CD8-positive, alpha-beta T cell (primary cell): ENCODE measurements at regions of chr9 and their contacts with region 1.

Region 1: DNA sequence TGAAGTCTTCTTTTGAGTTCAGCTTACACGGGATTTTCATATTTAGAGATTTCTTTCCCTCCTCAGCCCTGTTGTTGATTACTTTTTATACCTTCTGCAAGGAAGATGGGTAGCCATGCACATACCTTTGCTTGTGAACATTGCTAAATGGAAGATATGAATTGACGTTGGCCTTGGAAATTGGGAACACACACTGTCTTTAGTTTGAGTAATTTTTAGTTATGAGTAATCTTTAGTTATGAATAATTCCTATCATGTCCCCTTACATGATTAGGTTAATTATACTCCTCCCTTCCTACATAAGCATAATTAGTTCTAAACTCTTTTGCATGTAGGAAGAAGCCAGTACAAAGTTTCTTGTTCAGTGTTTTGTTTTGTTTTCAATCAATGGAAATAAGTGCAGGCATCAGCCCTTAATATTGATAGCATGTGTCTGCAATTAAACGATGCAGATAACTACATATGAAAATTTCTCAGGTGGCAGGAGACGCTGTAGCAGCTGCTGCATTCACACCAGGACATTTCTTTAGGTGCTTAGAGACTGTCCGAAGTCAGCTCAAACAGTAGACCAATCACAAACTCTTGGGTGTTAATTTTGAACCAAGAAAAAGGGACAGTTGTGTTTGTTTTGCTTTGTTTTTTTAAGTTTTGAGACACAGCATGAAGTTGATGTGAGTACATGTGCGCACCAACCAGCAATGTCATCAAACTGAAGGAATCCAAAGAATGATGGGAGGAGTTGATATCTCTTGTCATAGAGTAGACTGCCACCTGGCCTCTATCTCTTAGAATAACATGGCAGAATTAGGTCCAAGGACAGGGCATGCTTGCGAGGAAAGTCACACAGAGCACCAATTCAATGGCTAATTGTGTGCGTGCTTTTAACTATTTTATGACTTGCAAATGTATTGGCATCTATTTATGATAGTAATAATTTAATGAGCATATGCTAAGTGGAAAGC is 51.4 kb downstream of the SMARCA2 start:
- DNase-seq: peak in 2 of 9 experiments; percentile 36 to 55
- ATAC-seq: peak; percentile 71
- H3K4me3 ChIP-seq: no peak overlapping the region
- H3K4me3 Mint-ChIP-seq: no peak overlapping the region
- H3K27ac ChIP-seq: no peak overlapping the region
- H3K27ac Mint-ChIP-seq: peak overlapping the region; percentile 66
- H3K4me1 ChIP-seq: no peaks in the 10 kb centered on the region
- H3K4me1 Mint-ChIP-seq: peaks cover 6% of the 10 kb centered on the region
- H3K27me3 ChIP-seq: no peaks in the 10 kb centered on the region
- H3K27me3 Mint-ChIP-seq: no peaks in the 10 kb centered on the region
- CTCF ChIP-seq: peak; percentile 52

Region 2: GRCh38 chr9:1709345-1709744 is 357.2 kb before region 1 on chr9:
- CTCF ChIA-PET with region 1: interaction called, 3 read pairs
- POLR2A ChIA-PET with region 1: no interaction called
- intact Hi-C with region 1: loop called (anchors 5 kb)
- DNase-seq: peak in 2 of 9 experiments; percentile 19 to 37
- ATAC-seq: no peak
- H3K4me3 ChIP-seq: no peak overlapping the region
- H3K4me3 Mint-ChIP-seq: no peak overlapping the region
- H3K27ac ChIP-seq: no peak overlapping the region
- H3K27ac Mint-ChIP-seq: no peak overlapping the region
- H3K4me1 ChIP-seq: no peaks in the 10 kb centered on the region
- H3K4me1 Mint-ChIP-seq: no peaks in the 10 kb centered on the region
- H3K27me3 ChIP-seq: no peaks in the 10 kb centered on the region
- H3K27me3 Mint-ChIP-seq: peaks cover 15% of the 10 kb centered on the region
- CTCF ChIP-seq: no peak

Region 3: GRCh38 chr9:1726993-1727759 is 339.4 kb before region 1 on chr9:
- CTCF ChIA-PET with region 1: interaction called, 5 read pairs
- POLR2A ChIA-PET with region 1: no interaction called
- intact Hi-C with region 1: loop called (anchors 2 to 5 kb)
- DNase-seq: peak in 3 of 9 experiments; percentile 5 to 38 (median 22)
- ATAC-seq: no peak
- H3K4me3 ChIP-seq: no peak overlapping the region
- H3K4me3 Mint-ChIP-seq: no peak overlapping the region
- H3K27ac ChIP-seq: no peak overlapping the region
- H3K27ac Mint-ChIP-seq: no peak overlapping the region
- H3K4me1 ChIP-seq: no peaks in the 10 kb centered on the region
- H3K4me1 Mint-ChIP-seq: no peaks in the 10 kb centered on the region
- H3K27me3 ChIP-seq: no peaks in the 10 kb centered on the region
- H3K27me3 Mint-ChIP-seq: peaks cover 15% of the 10 kb centered on the region
- CTCF ChIP-seq: peak; percentile 20

Region 4: GRCh38 chr9:1939926-1940368 is 126.6 kb before region 1 on chr9:
- CTCF ChIA-PET with region 1: no interaction called
- POLR2A ChIA-PET with region 1: no interaction called
- intact Hi-C with region 1: loop called (anchors 2 to 5 kb)
- DNase-seq: peak in 4 of 9 experiments; percentile 8 to 51 (median 30)
- ATAC-seq: peak; percentile 51
- H3K4me3 ChIP-seq: no peak overlapping the region
- H3K4me3 Mint-ChIP-seq: no peak overlapping the region
- H3K27ac ChIP-seq: no peak overlapping the region
- H3K27ac Mint-ChIP-seq: no peak overlapping the region
- H3K4me1 ChIP-seq: no peaks in the 10 kb centered on the region
- H3K4me1 Mint-ChIP-seq: peaks cover 2% of the 10 kb centered on the region
- H3K27me3 ChIP-seq: no peaks in the 10 kb centered on the region
- H3K27me3 Mint-ChIP-seq: peaks cover 5% of the 10 kb centered on the region
- CTCF ChIP-seq: peak; percentile 37

Region 5: DNA sequence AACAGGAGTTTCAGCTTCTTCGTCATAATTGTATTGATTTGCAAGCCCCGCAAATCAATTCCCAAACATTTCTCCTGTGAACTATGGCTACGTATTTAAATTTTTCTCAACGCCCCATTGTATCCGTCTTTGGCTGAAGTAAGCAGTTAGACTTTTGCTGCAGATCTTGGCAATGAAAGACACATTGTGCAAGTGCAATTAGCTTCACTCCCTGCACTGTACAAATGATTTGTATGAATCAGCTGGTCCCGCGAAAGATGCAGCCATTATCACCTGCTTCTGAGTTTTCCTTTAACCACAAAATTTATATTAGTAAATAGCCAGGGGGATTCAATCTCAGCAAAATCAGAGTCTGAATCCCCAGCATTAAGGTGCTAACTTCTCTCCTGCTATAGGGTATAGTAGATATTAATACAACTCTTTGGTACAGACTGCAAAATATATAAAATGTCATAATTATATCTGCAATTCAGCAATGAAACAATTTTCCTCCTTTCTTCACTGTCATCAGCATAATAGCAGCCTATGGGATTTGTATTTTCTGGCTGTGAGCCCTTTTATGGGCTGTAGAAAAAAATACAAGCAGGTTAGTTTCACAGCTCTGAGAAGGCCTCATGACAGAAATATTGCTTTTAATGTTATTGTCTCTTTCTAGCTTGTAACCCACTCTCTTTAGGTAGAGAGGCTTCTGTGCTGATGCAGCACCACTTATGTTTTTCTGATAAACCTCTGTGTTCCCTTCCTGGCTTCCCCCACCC is 119.9 kb before region 1 on chr9:
- CTCF ChIA-PET with region 1: no interaction called
- POLR2A ChIA-PET with region 1: no interaction called
- intact Hi-C with region 1: loop called (anchors 2 to 5 kb)
- DNase-seq: no peak
- ATAC-seq: no peak
- H3K4me3 ChIP-seq: no peak overlapping the region
- H3K4me3 Mint-ChIP-seq: no peak overlapping the region
- H3K27ac ChIP-seq: no peak overlapping the region
- H3K27ac Mint-ChIP-seq: no peak overlapping the region
- H3K4me1 ChIP-seq: no peaks in the 10 kb centered on the region
- H3K4me1 Mint-ChIP-seq: no peaks in the 10 kb centered on the region
- H3K27me3 ChIP-seq: no peaks in the 10 kb centered on the region
- H3K27me3 Mint-ChIP-seq: peaks cover 2% of the 10 kb centered on the region
- CTCF ChIP-seq: no peak

Region 6: DNA sequence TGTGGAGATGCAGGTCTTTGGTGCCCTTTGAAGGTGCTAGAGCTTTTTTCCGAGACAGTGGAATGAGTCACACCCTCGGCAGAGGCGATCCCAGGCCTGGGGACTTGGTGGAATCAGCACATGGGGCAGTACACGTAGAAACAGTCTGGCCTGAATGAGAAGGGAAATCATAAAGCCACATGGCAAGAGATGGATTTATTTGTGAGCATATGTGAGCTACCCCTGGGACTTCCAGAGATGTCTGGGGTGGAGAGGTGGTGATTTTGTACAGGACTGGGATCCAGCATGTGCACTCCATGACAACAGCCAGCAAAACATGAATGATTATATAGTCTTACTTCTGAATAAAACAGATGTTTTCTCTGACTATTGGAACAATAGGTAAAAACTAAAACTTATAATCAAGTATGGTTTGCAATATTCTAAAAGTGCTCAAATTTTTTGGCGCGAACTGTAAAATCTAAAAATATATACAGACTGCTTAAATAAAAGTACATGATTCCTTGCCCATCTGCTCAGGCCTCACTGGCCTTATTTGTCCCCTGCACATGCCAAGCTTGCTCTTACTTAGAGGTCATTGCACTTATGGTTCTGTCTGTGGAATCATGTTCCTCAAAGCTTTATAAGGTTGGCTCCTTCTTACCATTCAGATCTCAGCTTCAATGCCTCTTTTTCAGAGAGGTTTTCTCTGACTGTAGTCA is 106.1 kb before region 1 on chr9:
- CTCF ChIA-PET with region 1: no interaction called
- POLR2A ChIA-PET with region 1: no interaction called
- intact Hi-C with region 1: loop called in 1 of 2 experiments (anchors 5 kb)
- DNase-seq: peak in 1 of 9 experiments; percentile 3
- ATAC-seq: no peak
- H3K4me3 ChIP-seq: no peak overlapping the region
- H3K4me3 Mint-ChIP-seq: no peak overlapping the region
- H3K27ac ChIP-seq: no peak overlapping the region
- H3K27ac Mint-ChIP-seq: no peak overlapping the region
- H3K4me1 ChIP-seq: no peaks in the 10 kb centered on the region
- H3K4me1 Mint-ChIP-seq: no peaks in the 10 kb centered on the region
- H3K27me3 ChIP-seq: no peaks in the 10 kb centered on the region
- H3K27me3 Mint-ChIP-seq: no peaks in the 10 kb centered on the region
- CTCF ChIP-seq: no peak

Region 7: DNA sequence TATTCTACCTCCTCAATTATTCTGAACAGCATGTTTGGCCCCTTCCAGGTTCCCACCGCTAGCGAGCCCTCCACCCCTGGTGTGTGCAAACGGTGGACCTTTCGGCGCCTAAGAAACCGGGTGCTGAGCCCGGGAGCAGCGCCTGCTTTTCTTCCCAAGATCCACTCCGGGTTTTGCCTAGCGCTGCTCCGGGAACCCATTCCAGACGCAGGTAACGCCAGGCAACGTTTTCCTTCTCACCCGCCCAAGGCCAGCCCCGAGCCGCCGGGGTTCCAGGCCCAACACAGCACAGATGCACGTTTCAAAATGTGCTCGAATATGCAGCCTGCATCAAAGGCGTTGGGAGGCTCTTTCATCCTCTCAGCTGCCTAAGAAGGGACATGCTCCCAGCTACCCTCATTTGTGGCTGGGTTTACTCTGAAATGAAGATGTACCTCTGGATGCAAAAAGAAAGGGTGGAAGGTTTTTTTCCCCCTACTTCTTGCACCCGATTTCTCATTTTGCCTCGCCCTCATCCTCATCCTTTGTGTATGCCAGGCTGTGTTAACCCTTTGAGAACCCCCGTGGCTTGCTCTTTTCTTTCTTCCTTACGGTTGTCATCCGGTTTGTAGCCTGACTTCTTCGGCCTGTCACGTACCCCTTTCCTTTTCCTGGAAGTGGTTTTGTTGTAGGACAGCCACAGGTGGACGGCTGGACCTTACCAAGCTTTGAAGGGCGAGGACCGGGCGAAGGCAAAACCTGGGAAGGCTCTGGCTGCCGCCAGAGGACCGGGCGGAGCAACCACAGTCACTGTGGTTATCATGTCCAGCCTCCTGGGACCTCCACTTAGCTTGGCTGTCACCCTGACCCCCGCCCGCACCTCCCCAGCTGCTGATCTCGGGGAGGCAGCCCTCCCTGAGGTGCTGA is 175.5 kb after region 1 on chr9:
- CTCF ChIA-PET with region 1: no interaction called
- POLR2A ChIA-PET with region 1: no interaction called
- intact Hi-C with region 1: no loop called
- DNase-seq: peak in 7 of 9 experiments; percentile 11 to 70 (median 34)
- ATAC-seq: peak; percentile 79
- H3K4me3 ChIP-seq: peak overlapping the region; percentile 41 to 43
- H3K4me3 Mint-ChIP-seq: peak overlapping the region; percentile 69
- H3K27ac ChIP-seq: no peak overlapping the region
- H3K27ac Mint-ChIP-seq: no peak overlapping the region
- H3K4me1 ChIP-seq: peaks cover 14% of the 10 kb centered on the region
- H3K4me1 Mint-ChIP-seq: peaks cover 17% of the 10 kb centered on the region
- H3K27me3 ChIP-seq: no peaks in the 10 kb centered on the region
- H3K27me3 Mint-ChIP-seq: peaks cover 25% of the 10 kb centered on the region
- CTCF ChIP-seq: no peak